Mammary epithelial cell (primary cell): ENCODE measurements at regions of chr4 and their contacts with region 1.

Region 1: DNA sequence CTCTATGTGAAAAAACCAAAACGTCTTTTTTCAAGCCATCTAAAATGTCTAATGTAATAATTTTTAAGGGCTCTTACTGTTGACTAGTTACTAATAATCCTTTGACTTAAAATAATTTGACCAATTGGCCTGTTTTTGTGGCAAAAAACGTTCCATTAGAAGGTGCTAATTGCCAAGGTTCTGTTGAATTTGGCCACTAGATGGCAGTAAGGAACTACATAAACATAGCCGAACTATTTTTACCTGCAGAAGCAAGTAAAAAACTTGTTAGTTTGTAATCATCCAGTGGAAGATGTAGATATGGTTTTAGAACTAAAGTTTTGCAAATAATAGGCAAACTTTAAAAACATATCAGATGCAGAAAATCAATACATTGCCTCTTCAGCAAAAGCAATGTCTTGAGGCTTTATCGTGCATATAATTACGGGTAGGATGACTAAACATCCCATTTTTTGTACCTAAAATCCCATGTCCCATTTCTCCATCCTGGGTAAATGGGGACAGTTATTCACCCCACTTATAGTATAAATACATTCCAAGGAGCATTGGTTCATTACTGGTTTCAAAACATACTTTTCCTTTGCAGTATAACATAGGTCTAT is 57.6 kb downstream of the PROM1 start:
- DNase-seq: peak; percentile 32
- H3K4me3 ChIP-seq: no peak overlapping the region
- H3K27ac ChIP-seq: no peak overlapping the region
- H3K4me1 ChIP-seq: peaks cover 4% of the 10 kb centered on the region
- H3K27me3 ChIP-seq: no peaks in the 10 kb centered on the region
- CTCF ChIP-seq: peak; percentile 75 to 76

Region 2: DNA sequence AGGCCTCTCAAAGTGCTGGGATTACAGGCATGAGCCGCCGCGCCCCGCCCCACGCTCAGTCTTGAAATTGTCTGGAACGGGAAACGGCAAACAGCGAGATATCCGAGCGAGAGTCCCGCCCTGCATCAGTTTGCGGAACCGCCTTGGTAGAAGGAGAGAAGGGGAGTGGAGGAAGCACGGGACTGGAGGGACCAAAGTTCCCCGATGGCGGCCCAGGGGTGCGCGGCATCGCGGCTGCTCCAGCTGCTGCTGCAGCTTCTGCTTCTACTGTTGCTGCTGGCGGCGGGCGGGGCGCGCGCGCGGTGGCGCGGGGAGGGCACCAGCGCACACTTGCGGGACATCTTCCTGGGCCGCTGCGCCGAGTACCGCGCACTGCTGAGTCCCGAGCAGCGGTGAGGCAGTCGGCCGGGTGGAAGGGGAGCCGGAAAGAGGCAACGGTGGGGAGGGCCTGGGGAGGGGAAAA is 323.3 kb before region 1 on chr4 and contains the start of gene BST1:
- CTCF ChIA-PET with region 1: no interaction called
- dilution Hi-C with region 1: no loop called
- in situ Hi-C with region 1: no loop called
- intact Hi-C with region 1: no loop called
- DNase-seq: peak; percentile 23
- H3K4me3 ChIP-seq: peak within 1 kb of the TSS; percentile 15 to 44 (median 36)
- H3K27ac ChIP-seq: no peak within 1 kb of the TSS
- H3K4me1 ChIP-seq: peaks cover 8% of the 10 kb centered on the region
- H3K27me3 ChIP-seq: no peaks in the 10 kb centered on the region
- CTCF ChIP-seq: no peak
- total RNA-seq, gene BST1: under 0.01 to 0.47 TPM

Region 3: GRCh38 chr4:15832523-15833451 is 193.5 kb before region 1 on chr4:
- CTCF ChIA-PET with region 1: no interaction called
- dilution Hi-C with region 1: no loop called
- in situ Hi-C with region 1: no loop called
- intact Hi-C with region 1: no loop called
- DNase-seq: peak; percentile 15
- H3K4me3 ChIP-seq: no peak overlapping the region
- H3K27ac ChIP-seq: no peak overlapping the region
- H3K4me1 ChIP-seq: peaks cover 7% of the 10 kb centered on the region
- H3K27me3 ChIP-seq: no peaks in the 10 kb centered on the region
- CTCF ChIP-seq: no peak

Region 4: GRCh38 chr4:16196478-16197393 is 170.5 kb after region 1 on chr4:
- CTCF ChIA-PET with region 1: no interaction called
- dilution Hi-C with region 1: no loop called
- in situ Hi-C with region 1: loop called in 1 of 2 experiments (anchors 5 kb)
- intact Hi-C with region 1: loop called (anchors 1 kb)
- DNase-seq: peak; percentile 72
- H3K4me3 ChIP-seq: peak overlapping the region; percentile 22 to 35 (median 26)
- H3K27ac ChIP-seq: peak overlapping the region; percentile 71
- H3K4me1 ChIP-seq: peaks cover 14% of the 10 kb centered on the region
- H3K27me3 ChIP-seq: no peaks in the 10 kb centered on the region
- CTCF ChIP-seq: peak; percentile 25 to 55

Region 5: DNA sequence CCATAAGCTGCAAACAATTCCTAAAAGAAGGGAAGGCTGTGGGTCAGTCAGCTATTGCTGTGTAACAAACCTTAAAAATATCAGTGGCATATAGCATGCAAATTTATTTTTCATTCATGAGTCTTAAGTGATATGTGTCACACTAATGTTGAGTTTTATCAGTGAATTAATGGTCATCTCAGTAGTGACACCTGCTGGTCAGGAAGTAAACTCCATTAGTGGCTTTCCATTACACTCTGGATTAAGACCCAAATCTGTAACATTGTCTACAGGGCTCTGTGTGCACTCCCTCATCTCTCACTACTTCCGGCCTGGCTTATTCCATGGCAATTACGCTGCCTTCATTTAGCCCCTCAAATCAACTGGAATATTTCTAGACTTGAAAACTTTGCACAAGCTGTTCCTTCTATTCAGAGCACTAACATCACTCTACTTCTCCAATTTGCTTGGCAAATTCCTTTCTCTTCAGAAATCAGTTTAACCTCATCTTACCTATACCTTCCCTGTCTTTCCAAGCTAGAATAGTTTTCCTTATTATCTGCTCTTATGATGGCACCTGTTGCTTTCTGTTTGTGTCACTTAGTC is 417.3 kb after region 1 on chr4:
- CTCF ChIA-PET with region 1: no interaction called
- dilution Hi-C with region 1: no loop called
- in situ Hi-C with region 1: loop called in 1 of 2 experiments (anchors 25 kb)
- intact Hi-C with region 1: loop called (anchors 2 kb)
- DNase-seq: peak; percentile 12
- H3K4me3 ChIP-seq: no peak overlapping the region
- H3K27ac ChIP-seq: no peak overlapping the region
- H3K4me1 ChIP-seq: no peaks in the 10 kb centered on the region
- H3K27me3 ChIP-seq: no peaks in the 10 kb centered on the region
- CTCF ChIP-seq: peak; percentile 68 to 75

Region 6: GRCh38 chr4:17468371-17469221 is 1442.3 kb after region 1 on chr4:
- CTCF ChIA-PET with region 1: no interaction called
- dilution Hi-C with region 1: no loop called
- in situ Hi-C with region 1: loop called in 1 of 2 experiments (anchors 25 kb)
- intact Hi-C with region 1: no loop called
- DNase-seq: no peak
- H3K4me3 ChIP-seq: no peak overlapping the region
- H3K27ac ChIP-seq: no peak overlapping the region
- H3K4me1 ChIP-seq: no peaks in the 10 kb centered on the region
- H3K27me3 ChIP-seq: no peaks in the 10 kb centered on the region
- CTCF ChIP-seq: peak; percentile 3 to 40